BJ (cell line): ENCODE measurements at regions of chr13 and their contacts with region 1.

Region 1: DNA sequence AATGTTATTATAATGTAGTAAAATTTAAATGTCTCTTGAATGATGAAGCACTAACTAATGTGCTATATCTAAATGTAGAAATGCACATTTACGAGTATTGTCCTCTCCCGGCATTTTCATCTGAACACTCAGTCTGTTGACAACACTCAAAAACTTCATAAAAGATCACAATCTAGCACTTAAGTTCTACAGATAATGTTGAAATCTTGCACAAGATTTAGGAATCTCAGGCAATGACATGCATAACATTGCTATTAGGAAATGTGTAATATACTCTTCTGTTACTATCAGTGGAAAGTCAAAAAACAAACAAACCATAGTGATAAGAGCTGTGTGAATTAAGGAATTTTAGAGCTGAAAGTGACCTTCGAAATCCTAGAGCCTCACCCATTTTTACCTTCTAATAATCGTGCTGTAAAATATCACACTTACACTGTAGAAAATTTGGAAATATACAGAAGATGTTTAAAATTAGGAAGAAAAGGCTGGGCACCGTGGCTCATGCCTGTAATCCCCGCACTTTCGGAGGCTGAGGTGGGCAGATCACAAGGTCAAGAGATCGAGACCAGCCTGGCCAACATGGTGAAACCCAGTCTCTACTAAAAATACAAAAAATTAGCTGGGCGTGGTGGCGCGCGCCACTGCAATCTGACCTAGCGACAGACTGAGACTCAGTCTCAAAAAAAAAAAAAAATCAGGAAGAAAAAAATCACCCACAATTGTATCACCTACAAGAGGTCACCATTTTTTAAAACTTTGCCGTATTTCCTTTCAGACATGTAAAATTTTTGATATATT is 37.7 kb upstream of the XPO4 start:
- DNase-seq: peak; percentile 66
- H3K4me3 ChIP-seq: no peak overlapping the region
- H3K27me3 ChIP-seq: peaks cover 4% of the 10 kb centered on the region; the same call in 1 of the 2 replicates
- CTCF ChIP-seq: no peak

Region 2: DNA sequence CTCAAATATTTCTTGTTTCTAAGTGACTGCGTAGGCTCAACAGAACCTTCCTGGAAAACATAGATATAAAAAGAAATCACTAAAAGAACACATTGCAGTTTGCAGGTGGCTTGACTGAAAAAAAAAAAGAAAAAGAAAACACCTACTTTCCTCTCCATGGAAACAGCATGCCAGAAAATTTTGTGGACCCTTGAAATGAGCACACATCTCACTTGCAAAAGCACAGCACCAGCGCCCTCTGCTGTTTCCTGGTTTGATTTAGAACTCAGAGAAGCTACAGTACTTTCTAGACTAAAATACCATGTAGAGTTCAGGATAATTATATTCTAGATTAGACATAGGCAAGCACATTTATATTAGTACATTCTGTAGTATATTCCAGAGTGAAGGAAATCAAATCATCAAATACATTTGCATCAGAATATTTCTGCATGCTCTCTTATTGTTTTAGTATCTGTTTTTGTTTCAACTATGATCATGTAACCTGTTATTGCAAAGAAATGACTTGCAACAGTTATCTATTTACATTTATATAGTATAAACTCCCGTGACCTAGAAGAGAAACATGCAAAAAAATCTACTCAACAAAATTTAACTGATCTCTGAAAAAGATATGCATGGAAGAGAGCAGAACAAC is 15.4 kb before region 1 on chr13:
- CTCF ChIA-PET with region 1: interaction called, 16 read pairs
- POLR2A ChIA-PET with region 1: no interaction called
- DNase-seq: no peak
- H3K4me3 ChIP-seq: no peak overlapping the region
- H3K27me3 ChIP-seq: peaks cover 4% of the 10 kb centered on the region
- CTCF ChIP-seq: peak; percentile 78

Region 3: DNA sequence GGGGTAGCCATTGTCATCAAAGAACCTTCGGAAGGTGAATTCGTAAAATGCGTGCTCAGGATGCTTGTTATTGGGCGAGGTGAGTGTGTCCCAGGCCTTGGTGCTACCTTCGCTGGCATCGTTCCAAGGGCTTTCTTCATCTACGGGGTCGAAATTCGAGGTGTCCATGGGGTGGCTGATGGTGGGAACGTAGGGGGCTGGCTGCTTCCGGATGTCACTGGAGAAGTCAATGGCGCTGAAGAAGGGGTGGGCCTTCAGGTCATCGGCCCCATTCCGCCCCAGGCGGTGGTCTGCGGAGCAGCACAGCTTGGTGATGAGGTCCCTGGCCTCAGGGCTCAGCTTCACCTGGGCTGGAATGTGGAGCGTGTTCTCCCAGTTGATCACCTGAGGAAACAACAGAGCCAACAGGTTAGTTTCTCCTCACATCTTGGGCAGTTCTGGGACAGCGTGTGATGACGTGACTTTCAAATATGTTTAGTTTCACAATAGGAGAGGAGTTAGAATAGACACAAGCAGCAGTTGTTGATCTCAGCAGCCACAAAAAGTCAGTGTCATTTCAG is 34.8 kb after region 1 on chr13:
- CTCF ChIA-PET with region 1: no interaction called
- POLR2A ChIA-PET with region 1: no interaction called
- DNase-seq: no peak
- H3K4me3 ChIP-seq: no peak overlapping the region
- H3K27me3 ChIP-seq: no peaks in the 10 kb centered on the region
- CTCF ChIP-seq: no peak

Region 4: GRCh38 chr13:21130116-21130515 is 189.8 kb after region 1 on chr13:
- CTCF ChIA-PET with region 1: interaction called, 20 read pairs
- POLR2A ChIA-PET with region 1: no interaction called
- DNase-seq: no peak
- H3K4me3 ChIP-seq: no peak overlapping the region
- H3K27me3 ChIP-seq: no peaks in the 10 kb centered on the region
- CTCF ChIP-seq: no peak

Region 5: GRCh38 chr13:21137696-21138095 is 197.4 kb after region 1 on chr13:
- CTCF ChIA-PET with region 1: interaction called, 20 read pairs
- POLR2A ChIA-PET with region 1: no interaction called
- DNase-seq: no peak
- H3K4me3 ChIP-seq: no peak overlapping the region
- H3K27me3 ChIP-seq: no peaks in the 10 kb centered on the region
- CTCF ChIP-seq: no peak

Region 6: DNA sequence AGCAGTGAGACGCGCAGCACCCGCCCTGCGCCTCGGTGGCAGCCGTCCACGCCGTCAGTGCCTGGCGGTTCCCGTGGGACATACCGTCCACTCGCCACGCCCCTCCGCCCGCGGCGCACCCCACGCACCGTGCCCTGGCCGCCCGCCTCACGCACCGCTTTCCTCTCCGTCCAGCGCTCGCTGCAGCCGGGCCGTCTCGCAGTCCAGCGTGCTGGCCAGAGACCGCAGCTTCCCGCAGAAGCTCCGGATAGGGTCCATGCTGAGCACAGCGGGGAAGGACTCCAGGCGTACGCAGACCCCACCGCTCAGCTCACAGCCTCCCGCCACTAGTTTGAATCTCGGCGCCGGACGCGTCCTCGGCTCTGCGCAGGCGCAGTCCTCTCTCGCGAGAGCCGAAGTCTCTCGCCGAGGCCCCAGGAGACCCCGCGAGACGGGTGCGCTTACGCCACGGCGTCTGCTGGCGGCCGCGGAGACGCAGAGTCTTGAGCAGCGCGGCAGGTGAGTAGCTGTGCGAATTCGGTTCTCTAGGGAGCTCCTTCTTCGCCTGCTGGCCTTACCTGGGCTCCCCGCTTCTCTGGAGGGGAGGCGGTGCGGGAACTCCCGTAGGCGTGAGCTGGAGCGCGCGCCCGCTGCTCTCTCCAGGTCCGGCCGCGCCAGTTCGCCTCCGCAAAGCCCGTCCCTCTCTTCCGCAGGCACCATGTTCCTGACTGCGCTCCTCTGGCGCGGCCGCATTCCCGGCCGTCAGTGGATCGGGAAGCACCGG is 236.1 kb after region 1 on chr13 and contains the starts of genes MRPL57 and SKA3:
- CTCF ChIA-PET with region 1: interaction called, 11 read pairs
- POLR2A ChIA-PET with region 1: no interaction called
- DNase-seq: peak; percentile 50
- H3K4me3 ChIP-seq: peak within 1 kb of the TSS; percentile 78
- H3K27me3 ChIP-seq: no peaks in the 10 kb centered on the region
- CTCF ChIP-seq: no peak
- polyA plus RNA-seq, gene MRPL57: 12.0 and 17.2 TPM in 2 replicates
- polyA plus RNA-seq, gene SKA3: 5.9 and 9.7 TPM in 2 replicates

Region 7: GRCh38 chr13:21181671-21182070 is 241.4 kb after region 1 on chr13:
- CTCF ChIA-PET with region 1: interaction called, 11 read pairs
- POLR2A ChIA-PET with region 1: no interaction called
- DNase-seq: no peak
- H3K4me3 ChIP-seq: no peak overlapping the region
- H3K27me3 ChIP-seq: no peaks in the 10 kb centered on the region
- CTCF ChIP-seq: no peak

Region 8: GRCh38 chr13:21476893-21477472 is 536.7 kb after region 1 on chr13:
- CTCF ChIA-PET with region 1: interaction called, 12 read pairs
- POLR2A ChIA-PET with region 1: no interaction called
- DNase-seq: no peak
- H3K4me3 ChIP-seq: peak overlapping the region; percentile 42
- H3K27me3 ChIP-seq: no peaks in the 10 kb centered on the region
- CTCF ChIP-seq: peak; percentile 99